PC-9 (cell line): ENCODE measurements at regions of chr11 and their contacts with region 1.

Region 1: GRCh38 chr11:32792948-32793475 is 1.4 kb downstream of the CCDC73 start:
- DNase-seq: peak in 1 of 2 experiments; percentile 62
- H3K4me3 ChIP-seq: peak overlapping the region; percentile 39; the same call in 1 of the 2 replicates
- H3K27ac ChIP-seq: no peak overlapping the region
- H3K4me1 ChIP-seq: no peaks in the 10 kb centered on the region
- H3K27me3 ChIP-seq: no peaks in the 10 kb centered on the region
- CTCF ChIP-seq: peak; percentile 95

Region 2: DNA sequence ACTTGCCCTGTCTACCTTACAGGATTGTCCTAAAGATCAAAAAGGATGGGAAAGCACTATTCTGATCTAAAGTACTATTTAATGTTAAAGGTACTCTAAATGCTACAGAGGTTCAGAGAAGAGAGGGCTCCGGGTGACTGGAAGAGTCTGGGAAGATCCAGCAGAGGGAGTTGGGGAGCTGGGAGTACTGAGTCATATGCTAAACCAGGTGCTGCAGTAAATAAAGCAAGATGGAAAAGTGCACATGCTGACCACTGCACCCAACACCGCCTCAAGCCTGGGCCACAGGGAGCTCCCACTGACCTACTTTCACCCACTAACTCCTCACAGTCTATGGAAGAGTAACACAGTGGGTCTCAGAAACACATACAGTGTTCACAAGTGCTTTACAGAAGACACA is 407.0 kb before region 1 on chr11:
- CTCF ChIA-PET with region 1: no interaction called
- POLR2A ChIA-PET with region 1: no interaction called
- intact Hi-C with region 1: loop called (anchors 5 kb)
- DNase-seq: peak; percentile 19 to 50
- H3K4me3 ChIP-seq: no peak overlapping the region
- H3K27ac ChIP-seq: no peak overlapping the region
- H3K4me1 ChIP-seq: peaks cover 9% of the 10 kb centered on the region; the same call in 1 of the 2 replicates
- H3K27me3 ChIP-seq: peaks cover 29% of the 10 kb centered on the region
- CTCF ChIP-seq: peak; percentile 67

Region 3: GRCh38 chr11:32583459-32584271 is 209.3 kb before region 1 on chr11 and contains the start of gene EIF3M:
- CTCF ChIA-PET with region 1: no interaction called
- POLR2A ChIA-PET with region 1: no interaction called
- intact Hi-C with region 1: loop called (anchors 10 kb)
- DNase-seq: peak; percentile 92 to 97
- H3K4me3 ChIP-seq: peak within 1 kb of the TSS; percentile 92
- H3K27ac ChIP-seq: peak within 1 kb of the TSS; percentile 83
- H3K4me1 ChIP-seq: peaks cover 46% of the 10 kb centered on the region
- H3K27me3 ChIP-seq: no peaks in the 10 kb centered on the region
- CTCF ChIP-seq: no peak
- total RNA-seq, gene EIF3M: 322 and 357 TPM in 2 replicates

Region 4: GRCh38 chr11:32671051-32671450 is 122.0 kb before region 1 on chr11:
- CTCF ChIA-PET with region 1: no interaction called
- POLR2A ChIA-PET with region 1: no interaction called
- intact Hi-C with region 1: no loop called
- DNase-seq: no peak
- H3K4me3 ChIP-seq: no peak overlapping the region
- H3K27ac ChIP-seq: no peak overlapping the region
- H3K4me1 ChIP-seq: no peaks in the 10 kb centered on the region
- H3K27me3 ChIP-seq: no peaks in the 10 kb centered on the region
- CTCF ChIP-seq: no peak

Region 5: DNA sequence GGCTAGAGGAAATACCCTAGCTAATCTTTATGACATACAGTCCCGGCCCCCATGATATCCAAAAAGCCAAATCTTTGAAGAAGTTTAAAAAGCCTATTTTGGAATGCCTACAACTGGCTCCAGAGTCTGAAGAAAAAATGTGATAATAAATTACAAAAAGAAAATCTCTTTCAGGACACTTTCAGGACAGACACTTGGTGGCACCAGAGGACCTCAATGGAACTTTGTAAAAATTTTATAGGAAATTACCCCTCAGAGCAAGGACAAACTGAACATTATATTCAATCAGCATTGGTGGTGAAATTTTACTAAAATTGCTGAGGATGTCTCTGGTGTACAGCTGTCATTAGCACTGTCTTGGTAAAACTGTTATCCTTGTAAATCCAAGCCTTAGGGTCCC is 79.5 kb before region 1 on chr11:
- CTCF ChIA-PET with region 1: interaction called, 4 read pairs
- POLR2A ChIA-PET with region 1: no interaction called
- intact Hi-C with region 1: loop called (anchors 1 kb)
- DNase-seq: peak in 1 of 2 experiments; percentile 11
- H3K4me3 ChIP-seq: no peak overlapping the region
- H3K27ac ChIP-seq: no peak overlapping the region
- H3K4me1 ChIP-seq: peaks cover 4% of the 10 kb centered on the region
- H3K27me3 ChIP-seq: no peaks in the 10 kb centered on the region
- CTCF ChIP-seq: peak; percentile 80